Heart right ventricle (tissue), 16 donors: ENCODE measurements at regions of chr7 and their contacts with region 1.

Region 1: DNA sequence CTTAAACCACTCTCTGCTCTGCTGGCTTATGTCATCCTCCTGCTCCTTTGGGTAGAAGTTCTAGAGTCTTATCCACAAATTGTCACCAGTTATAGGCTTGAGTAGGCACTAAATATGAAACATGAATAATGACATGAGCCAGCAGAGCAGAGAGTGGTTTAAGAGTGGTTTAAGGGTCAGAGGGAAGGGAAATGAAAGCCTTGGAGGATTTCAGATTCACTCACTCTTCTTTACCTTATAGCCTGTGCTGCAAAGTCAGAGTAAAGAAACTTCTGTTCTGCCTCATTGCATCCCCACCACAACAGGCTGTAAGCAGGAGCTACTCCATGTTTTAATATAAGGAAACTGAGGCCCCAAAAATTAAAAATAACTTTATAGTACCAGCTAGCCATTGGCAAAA is 749.6 kb downstream of the AUTS2 start:
- DNase-seq: no peak
- ATAC-seq: no peak
- H3K4me3 ChIP-seq: no peak overlapping the region
- H3K27ac ChIP-seq: no peak overlapping the region
- H3K4me1 ChIP-seq: peaks cover 0 to 6% (median 0%) of the 10 kb centered on the region in 9 donors
- H3K27me3 ChIP-seq: no peaks in the 10 kb centered on the region
- CTCF ChIP-seq: no peak

Region 2: GRCh38 chr7:70316786-70317755 is 30.8 kb before region 1 on chr7:
- intact Hi-C with region 1: no loop called
- DNase-seq: no peak
- ATAC-seq: no peak
- H3K4me3 ChIP-seq: no peak overlapping the region
- H3K27ac ChIP-seq: no peak overlapping the region
- H3K4me1 ChIP-seq: peaks cover 0 to 4% (median 0%) of the 10 kb centered on the region in 9 donors
- H3K27me3 ChIP-seq: no peaks in the 10 kb centered on the region
- CTCF ChIP-seq: no peak

Region 3: GRCh38 chr7:70384891-70385290 is 37.0 kb after region 1 on chr7:
- intact Hi-C with region 1: no loop called
- DNase-seq: no peak
- ATAC-seq: no peak
- H3K4me3 ChIP-seq: no peak overlapping the region
- H3K27ac ChIP-seq: no peak overlapping the region
- H3K4me1 ChIP-seq: peaks cover 0 to 17% (median 4%) of the 10 kb centered on the region in 9 donors
- H3K27me3 ChIP-seq: no peaks in the 10 kb centered on the region
- CTCF ChIP-seq: no peak

Region 4: GRCh38 chr7:70417141-70417655 is 69.3 kb after region 1 on chr7:
- intact Hi-C with region 1: loop called in 1 of 10 experiments (anchors 10 kb)
- DNase-seq: no peak
- ATAC-seq: peak in 1 of 8 donors; percentile 24
- H3K4me3 ChIP-seq: no peak overlapping the region
- H3K27ac ChIP-seq: no peak overlapping the region
- H3K4me1 ChIP-seq: no peaks in the 10 kb centered on the region
- H3K27me3 ChIP-seq: no peaks in the 10 kb centered on the region
- CTCF ChIP-seq: no peak